ENCODE measurements at regions of chr17 and their contacts with region 1.

Region 1: GRCh38 chr17:66673668-66674315 is 161.1 kb upstream of the CACNG5 start:
- DNase-seq: peak in 1 of 2 donors; percentile 46
- ATAC-seq: peak; percentile 55 to 80 (median 69)
- H3K4me3 ChIP-seq: no peak overlapping the region
- H3K27ac ChIP-seq: peak overlapping the region in 1 of 10 donors; percentile 10
- H3K4me1 ChIP-seq: peaks cover 0 to 7% (median 0%) of the 10 kb centered on the region in 9 donors
- H3K27me3 ChIP-seq: no peaks in the 10 kb centered on the region
- CTCF ChIP-seq: peak; percentile 36 to 81 (median 66)

Region 2: GRCh38 chr17:66200685-66201092 is 473.1 kb before region 1 on chr17:
- intact Hi-C with region 1: loop called in 3 of 10 experiments (anchors 5 kb)
- DNase-seq: peak in 1 of 2 donors; percentile 29
- ATAC-seq: peak in 3 of 8 donors; percentile 27 to 52 (median 45)
- H3K4me3 ChIP-seq: no peak overlapping the region
- H3K27ac ChIP-seq: no peak overlapping the region
- H3K4me1 ChIP-seq: no peaks in the 10 kb centered on the region
- H3K27me3 ChIP-seq: no peaks in the 10 kb centered on the region
- CTCF ChIP-seq: peak; percentile 33 to 71 (median 54)

Region 3: DNA sequence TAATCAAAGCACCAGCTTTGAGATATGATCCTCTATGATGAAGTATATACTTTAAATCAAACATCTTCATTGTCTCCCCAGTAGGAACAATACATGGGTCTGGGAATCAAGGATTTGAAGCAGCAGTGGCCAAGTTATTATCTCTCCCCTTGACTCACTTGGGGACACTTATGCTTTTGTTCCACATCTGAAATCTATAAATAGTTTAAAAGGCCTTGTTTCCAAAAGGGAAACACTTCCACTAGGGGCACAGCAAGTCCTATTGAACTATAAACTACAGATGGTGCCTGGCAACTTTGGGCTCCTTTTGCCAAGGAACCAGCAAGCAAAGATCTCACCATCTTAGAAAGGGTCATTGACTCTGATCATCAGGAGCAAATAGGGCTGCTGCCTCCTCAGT is 465.9 kb before region 1 on chr17:
- intact Hi-C with region 1: loop called in 3 of 10 experiments (anchors 5 kb)
- DNase-seq: no peak
- ATAC-seq: peak in 6 of 8 donors; percentile 49 to 87 (median 72)
- H3K4me3 ChIP-seq: no peak overlapping the region
- H3K27ac ChIP-seq: no peak overlapping the region
- H3K4me1 ChIP-seq: peaks cover 0 to 18% (median 0%) of the 10 kb centered on the region in 9 donors
- H3K27me3 ChIP-seq: no peaks in the 10 kb centered on the region
- CTCF ChIP-seq: peak in 3 of 9 donors; percentile 8 to 25 (median 20)

Region 4: GRCh38 chr17:66248285-66248684 is 425.5 kb before region 1 on chr17:
- intact Hi-C with region 1: loop called in 3 of 10 experiments (anchors 5 to 10 kb)
- DNase-seq: peak in 1 of 2 donors; percentile 8
- ATAC-seq: peak in 7 of 8 donors; percentile 33 to 96 (median 85)
- H3K4me3 ChIP-seq: no peak overlapping the region
- H3K27ac ChIP-seq: no peak overlapping the region
- H3K4me1 ChIP-seq: peaks cover 0 to 7% (median 0%) of the 10 kb centered on the region in 9 donors
- H3K27me3 ChIP-seq: no peaks in the 10 kb centered on the region
- CTCF ChIP-seq: no peak

Region 5: GRCh38 chr17:66255112-66255511 is 418.7 kb before region 1 on chr17:
- intact Hi-C with region 1: loop called (anchors 1 to 10 kb)
- DNase-seq: peak in 1 of 2 donors; percentile 36
- ATAC-seq: peak in 7 of 8 donors; percentile 58 to 82 (median 68)
- H3K4me3 ChIP-seq: no peak overlapping the region
- H3K27ac ChIP-seq: no peak overlapping the region
- H3K4me1 ChIP-seq: peaks cover 0 to 3% (median 0%) of the 10 kb centered on the region in 9 donors
- H3K27me3 ChIP-seq: no peaks in the 10 kb centered on the region
- CTCF ChIP-seq: peak; percentile 32 to 83 (median 70)

Region 6: DNA sequence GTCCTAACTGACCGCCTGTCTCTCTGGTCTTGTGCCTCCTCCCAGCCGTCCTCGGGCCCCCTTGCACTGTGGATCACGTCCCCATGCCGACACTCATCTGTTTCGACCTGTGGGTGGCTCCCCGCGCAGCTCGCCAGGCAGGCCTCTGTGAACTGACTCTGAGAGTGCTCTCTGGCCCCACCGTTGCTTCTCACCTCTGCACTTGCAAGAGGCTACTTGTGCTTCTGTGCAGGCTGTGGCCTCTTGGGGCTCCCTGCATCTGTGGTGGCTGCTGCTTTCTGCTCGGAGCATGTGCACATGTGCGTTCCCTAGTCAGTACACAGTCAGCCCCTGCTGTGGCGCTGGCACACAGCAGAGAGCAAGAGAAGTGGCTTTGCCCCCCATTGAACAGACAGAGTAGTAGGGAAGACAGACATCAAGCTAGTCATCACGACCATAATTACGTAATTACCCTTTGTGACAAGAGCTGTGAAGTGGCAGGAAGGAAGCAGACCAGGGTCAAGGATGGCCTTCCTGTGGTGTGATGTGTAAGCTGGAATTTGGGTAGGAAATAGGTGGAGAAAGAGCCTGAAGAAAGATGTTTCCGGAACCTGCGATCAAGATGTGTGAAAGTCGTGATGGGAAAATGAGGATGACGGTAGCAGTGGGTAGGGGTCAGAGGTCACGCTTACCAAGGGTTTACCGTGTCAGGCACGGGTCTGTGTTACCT is 94.9 kb before region 1 on chr17:
- intact Hi-C with region 1: loop called in 1 of 10 experiments (anchors 10 kb)
- DNase-seq: no peak
- ATAC-seq: peak in 1 of 8 donors; percentile 19
- H3K4me3 ChIP-seq: no peak overlapping the region
- H3K27ac ChIP-seq: no peak overlapping the region
- H3K4me1 ChIP-seq: peaks cover 0 to 33% (median 21%) of the 10 kb centered on the region in 9 donors
- H3K27me3 ChIP-seq: no peaks in the 10 kb centered on the region
- CTCF ChIP-seq: no peak

Region 7: DNA sequence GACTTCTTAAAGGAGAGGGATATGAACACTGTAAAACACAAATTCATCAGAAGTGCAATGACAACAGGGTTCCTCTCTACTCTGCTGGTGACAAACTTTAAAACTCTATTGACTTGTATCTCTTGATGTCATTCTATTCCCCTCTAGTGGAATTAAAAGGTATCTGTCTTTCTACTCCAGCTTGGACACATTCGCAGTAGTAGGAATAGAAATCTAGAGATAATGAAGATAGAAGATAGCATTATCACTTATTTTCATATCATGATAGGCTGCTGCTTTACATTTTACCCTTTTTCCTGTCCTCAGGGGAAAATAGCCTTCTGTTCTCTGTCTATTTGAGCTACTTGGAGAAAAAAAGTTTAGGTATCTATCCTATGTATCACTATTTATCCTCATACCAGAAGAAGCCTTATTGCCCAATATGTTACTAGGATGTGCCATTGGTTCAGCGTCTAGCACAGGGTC is 48.4 kb before region 1 on chr17:
- intact Hi-C with region 1: loop called in 1 of 10 experiments (anchors 10 kb)
- DNase-seq: no peak
- ATAC-seq: peak in 1 of 8 donors; percentile 31
- H3K4me3 ChIP-seq: no peak overlapping the region
- H3K27ac ChIP-seq: no peak overlapping the region
- H3K4me1 ChIP-seq: no peaks in the 10 kb centered on the region
- H3K27me3 ChIP-seq: no peaks in the 10 kb centered on the region
- CTCF ChIP-seq: peak; percentile 17 to 68 (median 54)

Region 8: GRCh38 chr17:66737524-66737923 is 63.7 kb after region 1 on chr17:
- intact Hi-C with region 1: no loop called
- DNase-seq: peak; percentile 40 to 46
- ATAC-seq: peak; percentile 85 to 97 (median 93)
- H3K4me3 ChIP-seq: no peak overlapping the region
- H3K27ac ChIP-seq: no peak overlapping the region
- H3K4me1 ChIP-seq: peaks cover 0 to 10% (median 0%) of the 10 kb centered on the region in 9 donors
- H3K27me3 ChIP-seq: no peaks in the 10 kb centered on the region
- CTCF ChIP-seq: peak in 6 of 9 donors; percentile 34 to 56 (median 42)